PC-3 (cell line): ENCODE measurements at regions of chr6 and their contacts with region 1.

Region 1: DNA sequence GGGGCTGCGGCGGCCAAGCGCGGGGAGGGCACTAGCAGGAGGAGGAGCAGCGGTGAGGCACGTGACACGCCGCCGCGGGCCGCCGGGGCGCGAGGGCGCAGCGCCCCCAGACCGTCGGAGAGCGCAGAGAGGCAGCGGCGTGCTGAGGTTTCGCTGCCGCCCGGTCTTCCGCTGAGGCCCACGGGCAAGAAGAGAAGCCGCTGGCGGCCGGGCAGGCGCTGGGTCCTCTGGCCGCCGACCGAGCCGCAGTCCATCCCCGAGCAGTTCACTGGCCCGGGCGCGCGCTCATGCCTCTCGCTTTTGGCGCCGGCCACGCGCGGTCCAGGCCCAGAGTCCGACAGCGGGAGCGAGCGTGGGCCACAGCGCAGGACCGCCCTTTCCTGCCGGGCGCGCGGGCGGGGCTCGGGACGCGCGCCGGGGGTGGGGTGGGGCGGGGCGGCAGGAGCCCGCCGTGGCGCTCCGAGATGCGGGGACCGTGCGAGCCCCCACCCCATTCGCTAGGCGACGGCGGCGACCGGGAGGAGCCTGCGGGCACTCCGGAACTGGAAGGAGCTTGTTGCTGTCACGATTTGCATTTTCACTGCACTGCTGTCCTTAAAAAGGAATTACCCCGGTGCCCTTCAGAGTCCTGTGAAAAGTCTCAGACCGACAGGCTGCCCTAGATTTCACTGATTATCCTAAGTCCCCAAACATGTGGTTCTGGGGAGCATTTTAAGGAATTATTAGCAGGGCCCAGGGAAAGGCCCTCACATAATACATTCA is at the start of gene MCUR1:
- DNase-seq: peak; percentile 89
- ATAC-seq: peak; percentile 76
- H3K4me3 ChIP-seq: peak within 1 kb of the TSS; percentile 86
- H3K27ac ChIP-seq: peak within 1 kb of the TSS; percentile 44
- H3K4me1 ChIP-seq: peaks cover 18% of the 10 kb centered on the region
- H3K27me3 ChIP-seq: no peaks in the 10 kb centered on the region
- CTCF ChIP-seq: peak; percentile 22; the same call in 1 of the 2 replicates
- total RNA-seq, gene MCUR1: 28.6 and 36.2 TPM in 2 replicates

Region 2: GRCh38 chr6:14144678-14145113 is 330.3 kb after region 1 on chr6:
- CTCF ChIA-PET with region 1: no interaction called
- POLR2A ChIA-PET with region 1: interaction called, 18 read pairs
- intact Hi-C with region 1: no loop called
- DNase-seq: peak; percentile 77
- ATAC-seq: peak; percentile 98
- H3K4me3 ChIP-seq: no peak overlapping the region
- H3K27ac ChIP-seq: no peak overlapping the region
- H3K4me1 ChIP-seq: no peaks in the 10 kb centered on the region
- H3K27me3 ChIP-seq: no peaks in the 10 kb centered on the region
- CTCF ChIP-seq: peak; percentile 95